ENCODE measurements at regions of chr5 and their contacts with region 1.

Region 1: GRCh38 chr5:424301-425110 is 18.5 kb upstream of the EXOC3 start:
- DNase-seq: no peak
- H3K4me3 Mint-ChIP-seq: no peak overlapping the region
- H3K27ac Mint-ChIP-seq: no peak overlapping the region
- H3K4me1 Mint-ChIP-seq: peaks cover 22% of the 10 kb centered on the region
- H3K27me3 Mint-ChIP-seq: no peaks in the 10 kb centered on the region

Region 2: GRCh38 chr5:188488-189481 is 235.7 kb before region 1 on chr5:
- CTCF ChIA-PET with region 1: interaction called, 11 read pairs
- DNase-seq: peak; percentile 93
- H3K4me3 Mint-ChIP-seq: no peak overlapping the region
- H3K27ac Mint-ChIP-seq: no peak overlapping the region
- H3K4me1 Mint-ChIP-seq: peaks cover 9% of the 10 kb centered on the region
- H3K27me3 Mint-ChIP-seq: peaks cover 31% of the 10 kb centered on the region

Region 3: GRCh38 chr5:317086-317811 is 107.3 kb before region 1 on chr5:
- CTCF ChIA-PET with region 1: interaction called, 46 read pairs
- DNase-seq: peak; percentile 53
- H3K4me3 Mint-ChIP-seq: no peak overlapping the region
- H3K27ac Mint-ChIP-seq: peak overlapping the region; percentile 52
- H3K4me1 Mint-ChIP-seq: peaks cover 11% of the 10 kb centered on the region
- H3K27me3 Mint-ChIP-seq: peaks cover 34% of the 10 kb centered on the region

Region 4: DNA sequence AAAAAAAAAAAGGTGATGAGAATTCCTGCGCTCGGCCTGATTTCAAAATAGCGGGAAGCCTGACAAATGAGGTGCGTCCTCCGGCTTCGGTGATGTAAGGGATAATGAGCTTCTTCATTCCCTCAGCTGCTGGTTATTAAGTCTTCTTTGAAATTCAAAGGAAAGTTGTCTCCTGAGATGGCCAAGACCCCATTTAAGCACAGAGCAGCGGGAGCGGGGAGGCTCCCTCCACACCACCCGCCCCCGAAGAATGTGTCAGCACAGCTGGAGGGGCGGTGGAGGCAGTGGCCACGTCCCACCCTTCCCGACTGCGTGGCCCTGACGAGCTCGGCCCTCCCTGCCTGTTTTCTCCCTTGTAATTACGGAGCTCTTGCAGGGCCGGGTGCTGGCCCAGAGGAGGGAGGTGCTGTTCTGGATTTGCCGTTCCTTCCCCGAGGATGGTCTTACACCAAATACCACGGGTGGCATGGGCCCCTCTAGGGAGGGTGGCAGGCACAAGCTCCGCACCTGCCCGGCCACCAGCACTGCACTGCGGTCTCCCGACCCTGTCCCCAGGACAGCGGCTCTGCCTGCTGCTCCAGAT is 68.7 kb after region 1 on chr5:
- CTCF ChIA-PET with region 1: no interaction called
- DNase-seq: no peak
- H3K4me3 Mint-ChIP-seq: no peak overlapping the region
- H3K27ac Mint-ChIP-seq: no peak overlapping the region
- H3K4me1 Mint-ChIP-seq: no peaks in the 10 kb centered on the region
- H3K27me3 Mint-ChIP-seq: peaks cover 16% of the 10 kb centered on the region